ENCODE measurements at regions of chr1 and their contacts with region 1.

Region 1: DNA sequence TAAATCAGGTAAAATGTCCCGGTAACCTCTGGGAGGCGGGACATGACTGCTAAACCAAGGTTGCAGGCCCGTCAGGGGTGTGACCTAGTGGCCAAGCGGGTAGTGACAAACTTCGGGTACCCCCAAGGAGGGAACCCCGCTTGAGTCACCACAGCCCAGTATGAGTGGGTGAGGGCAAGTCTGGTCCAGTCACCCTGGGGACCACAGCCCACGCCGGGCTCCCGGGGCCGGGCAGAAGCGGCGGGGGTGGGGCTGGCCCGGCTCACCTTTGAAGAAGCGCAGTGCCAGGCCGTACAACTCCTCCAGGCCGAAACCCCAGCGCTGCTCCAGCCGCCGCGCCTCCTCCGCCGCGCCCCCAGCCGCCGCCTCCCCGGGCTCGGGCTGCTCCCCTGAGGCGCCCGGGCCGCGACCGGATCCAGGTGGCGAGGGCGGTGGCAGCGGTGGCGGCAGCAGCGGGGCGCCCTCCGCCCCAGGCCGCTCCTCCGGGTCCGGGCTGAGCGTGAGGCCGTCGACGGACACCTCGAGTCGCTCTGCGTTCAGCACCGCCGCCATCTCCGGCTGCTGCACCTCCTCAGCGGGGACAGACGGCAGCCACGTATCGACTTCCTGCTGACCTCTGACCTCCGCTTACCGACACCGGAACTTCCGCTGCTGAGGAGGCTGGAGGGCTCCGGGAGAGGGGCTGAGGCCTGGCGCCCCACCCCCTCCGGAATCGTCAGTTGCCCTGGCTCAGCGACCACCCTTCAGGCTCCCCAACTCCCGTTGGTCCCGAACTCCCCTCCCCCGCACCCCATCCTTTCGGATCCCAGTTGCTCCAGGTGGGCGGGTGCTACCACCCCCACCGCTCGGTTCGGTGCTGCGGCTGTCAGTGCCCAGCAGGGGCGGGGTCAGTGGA is at the start of gene ACBD3:
- DNase-seq: peak; percentile 92
- H3K4me3 ChIP-seq: peak within 1 kb of the TSS; percentile 82
- H3K27ac ChIP-seq: peak within 1 kb of the TSS; percentile 66
- H3K4me1 ChIP-seq: peaks cover 42% of the 10 kb centered on the region
- CTCF ChIP-seq: 0 out of 2 replicates have a peak, but pooled peaks have one; percentile 15
- total RNA-seq, gene ACBD3: 30.3 and 35.3 TPM in 2 replicates

Region 2: GRCh38 chr1:226062558-226063223 is 123.7 kb before region 1 on chr1 and contains the start of gene H3-3A:
- CTCF ChIA-PET with region 1: no interaction called
- POLR2A ChIA-PET with region 1: no interaction called
- intact Hi-C with region 1: loop called (anchors 5 kb)
- DNase-seq: peak; percentile 96
- H3K4me3 ChIP-seq: peak within 1 kb of the TSS; percentile 89
- H3K27ac ChIP-seq: peak within 1 kb of the TSS; percentile 92
- H3K4me1 ChIP-seq: peaks cover 33% of the 10 kb centered on the region
- CTCF ChIP-seq: 0 out of 2 replicates have a peak, but pooled peaks have one; percentile 22
- total RNA-seq, gene H3-3A: 365 and 416 TPM in 2 replicates

Region 3: GRCh38 chr1:226132728-226133503 is 53.5 kb before region 1 on chr1:
- CTCF ChIA-PET with region 1: no interaction called
- POLR2A ChIA-PET with region 1: interaction called, 10 read pairs
- intact Hi-C with region 1: no loop called
- DNase-seq: no peak
- H3K4me3 ChIP-seq: no peak overlapping the region
- H3K27ac ChIP-seq: no peak overlapping the region
- H3K4me1 ChIP-seq: peaks cover 30% of the 10 kb centered on the region
- CTCF ChIP-seq: no peak

Region 4: DNA sequence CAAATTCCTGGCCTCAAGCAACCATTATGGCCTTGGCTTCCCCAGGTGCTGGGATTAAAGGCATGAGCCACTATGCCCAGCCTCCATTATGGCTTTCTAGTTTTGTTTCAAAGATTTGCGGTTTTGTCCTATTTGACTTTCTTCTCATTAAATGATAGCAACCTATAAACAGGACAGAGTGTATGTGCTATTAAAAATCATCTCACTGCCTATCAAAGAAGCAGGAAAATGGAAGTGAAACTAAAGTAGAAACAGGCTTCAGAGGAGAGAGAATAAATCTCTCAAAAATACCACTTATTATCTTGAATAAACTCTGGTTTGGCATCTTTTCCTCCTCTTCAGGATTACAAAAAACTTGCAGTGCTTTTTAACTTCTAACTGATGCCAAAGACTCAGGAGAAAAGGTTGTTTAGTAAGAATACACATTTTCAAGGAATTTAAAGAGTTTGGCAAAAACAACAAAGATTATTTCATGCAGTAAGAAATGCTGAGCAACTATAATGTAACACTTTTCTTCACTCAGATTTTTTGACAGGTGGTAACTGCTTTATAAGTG is 28.5 kb before region 1 on chr1:
- CTCF ChIA-PET with region 1: interaction called, 3 read pairs
- POLR2A ChIA-PET with region 1: interaction called, 6 read pairs
- intact Hi-C with region 1: loop called (anchors 2 kb)
- DNase-seq: peak; percentile 71
- H3K4me3 ChIP-seq: peak overlapping the region; percentile 26
- H3K27ac ChIP-seq: peak overlapping the region; percentile 85
- H3K4me1 ChIP-seq: peaks cover 58% of the 10 kb centered on the region
- CTCF ChIP-seq: no peak

Region 5: GRCh38 chr1:226166341-226166740 is 20.0 kb before region 1 on chr1:
- CTCF ChIA-PET with region 1: interaction called, 3 read pairs
- POLR2A ChIA-PET with region 1: interaction called, 25 read pairs
- intact Hi-C with region 1: no loop called
- DNase-seq: no peak
- H3K4me3 ChIP-seq: no peak overlapping the region
- H3K27ac ChIP-seq: no peak overlapping the region
- H3K4me1 ChIP-seq: peaks cover 17% of the 10 kb centered on the region
- CTCF ChIP-seq: no peak

Region 6: GRCh38 chr1:226332947-226333346 is 146.6 kb after region 1 on chr1:
- CTCF ChIA-PET with region 1: interaction called, 3 read pairs
- POLR2A ChIA-PET with region 1: interaction called, 13 read pairs
- intact Hi-C with region 1: no loop called
- DNase-seq: peak; percentile 40
- H3K4me3 ChIP-seq: peak overlapping the region; percentile 55
- H3K27ac ChIP-seq: peak overlapping the region; percentile 69
- H3K4me1 ChIP-seq: peaks cover 62% of the 10 kb centered on the region
- CTCF ChIP-seq: no peak